Activated CD8-positive, alpha-beta T cell treated with anti-CD3 and anti-CD28 coated beads for 36 hours (primary cell): ENCODE measurements at regions of chr17 and their contacts with region 1.

Region 1: GRCh38 chr17:17303010-17303846 is at the start of gene NT5M:
- DNase-seq: peak; percentile 82
- ATAC-seq: peak; percentile 64
- H3K4me3 Mint-ChIP-seq: peak within 1 kb of the TSS; percentile 79
- H3K27ac Mint-ChIP-seq: peak within 1 kb of the TSS; percentile 85
- H3K4me1 Mint-ChIP-seq: peaks cover 42% of the 10 kb centered on the region
- H3K27me3 Mint-ChIP-seq: no peaks in the 10 kb centered on the region
- CTCF ChIP-seq: no peak
- total RNA-seq, gene NT5M: 8.3 to 9.4 TPM

Region 2: GRCh38 chr17:17280613-17281549 is 22.3 kb before region 1 on chr17 and contains the start of gene COPS3:
- CTCF ChIA-PET with region 1: interaction called, 10 read pairs
- POLR2A ChIA-PET with region 1: interaction called, 22 read pairs
- intact Hi-C with region 1: no loop called
- DNase-seq: peak; percentile 99
- ATAC-seq: peak; percentile 92
- H3K4me3 Mint-ChIP-seq: peak within 1 kb of the TSS; percentile 94
- H3K27ac Mint-ChIP-seq: peak within 1 kb of the TSS; percentile 83
- H3K4me1 Mint-ChIP-seq: peaks cover 35% of the 10 kb centered on the region
- H3K27me3 Mint-ChIP-seq: no peaks in the 10 kb centered on the region
- CTCF ChIP-seq: no peak
- total RNA-seq, gene COPS3: 91.1 to 99.8 TPM

Region 3: DNA sequence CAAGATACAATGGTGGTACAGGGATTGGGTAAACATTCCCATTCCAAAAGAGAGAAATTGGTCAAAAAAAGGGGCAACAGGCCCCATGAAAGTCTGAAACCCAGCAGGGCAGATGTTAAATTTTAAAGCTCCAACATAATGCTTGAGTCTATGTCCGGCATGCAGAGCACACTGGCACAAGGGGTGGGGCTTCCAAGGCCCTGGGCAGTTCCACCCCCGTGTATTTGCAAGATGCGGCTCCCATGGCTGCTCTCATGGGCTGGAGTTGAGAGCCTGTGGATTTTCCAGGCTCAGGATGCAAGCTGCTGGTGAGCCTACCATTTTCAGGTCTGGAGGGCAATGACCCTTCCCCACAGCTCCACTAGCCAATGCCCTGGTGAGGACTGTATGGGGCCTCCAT is 350.1 kb after region 1 on chr17:
- CTCF ChIA-PET with region 1: no interaction called
- POLR2A ChIA-PET with region 1: no interaction called
- intact Hi-C with region 1: no loop called
- DNase-seq: no peak
- ATAC-seq: no peak
- H3K4me3 Mint-ChIP-seq: no peak overlapping the region
- H3K27ac Mint-ChIP-seq: no peak overlapping the region
- H3K4me1 Mint-ChIP-seq: no peaks in the 10 kb centered on the region
- H3K27me3 Mint-ChIP-seq: no peaks in the 10 kb centered on the region
- CTCF ChIP-seq: no peak